GM12878 (cell line): ENCODE measurements at regions of chr16 and their contacts with region 1.

Region 1: DNA sequence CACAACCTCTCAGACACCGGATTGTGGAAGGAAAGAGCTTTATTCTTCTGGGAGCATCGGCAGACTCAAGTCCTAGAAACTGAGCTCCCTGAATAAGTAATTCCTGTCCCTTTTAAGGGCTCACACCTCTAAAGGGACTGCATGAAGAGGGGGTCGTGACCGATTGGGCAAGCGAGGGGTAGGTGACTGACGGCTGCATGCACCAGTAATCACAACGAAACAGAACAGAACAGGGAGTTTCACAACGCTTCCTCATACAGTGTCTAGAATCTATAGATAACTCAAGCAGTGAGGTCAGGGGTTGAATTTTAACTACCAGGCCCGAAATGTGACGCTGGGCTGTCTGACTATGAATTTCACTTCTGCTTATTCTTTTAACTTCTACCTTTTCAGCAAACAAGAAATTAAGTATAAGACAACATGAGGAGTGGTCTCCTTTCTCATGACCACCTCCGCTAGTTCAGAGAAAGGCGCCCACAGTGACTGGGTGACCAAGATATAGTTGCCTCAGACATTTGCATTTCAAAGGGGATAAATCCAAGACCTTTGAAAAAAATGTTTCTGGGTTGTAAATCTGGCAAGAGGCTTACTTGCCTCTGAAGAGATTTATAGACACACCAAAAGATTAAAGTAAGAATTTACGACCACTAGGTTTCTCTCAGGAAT is 88.4 kb upstream of the ATF7IP2 start:
- DNase-seq: peak; percentile 98
- ATAC-seq: peak; percentile 98
- H3K4me3 ChIP-seq: peak overlapping the region; percentile 50; the same call in 1 of the 2 replicates
- H3K27ac ChIP-seq: peak overlapping the region; percentile 99
- H3K4me1 ChIP-seq: peaks cover 31% of the 10 kb centered on the region
- H3K27me3 ChIP-seq: no peaks in the 10 kb centered on the region
- CTCF ChIP-seq: no peak
- EP300 ChIP-seq: peak; percentile 94 to 96; a peak in 3 of 4 replicates
- POLR2A ChIP-seq: peak; percentile 39; the same call in 1 of the 2 replicates
- RAD21 ChIP-seq: no peak

Region 2: DNA sequence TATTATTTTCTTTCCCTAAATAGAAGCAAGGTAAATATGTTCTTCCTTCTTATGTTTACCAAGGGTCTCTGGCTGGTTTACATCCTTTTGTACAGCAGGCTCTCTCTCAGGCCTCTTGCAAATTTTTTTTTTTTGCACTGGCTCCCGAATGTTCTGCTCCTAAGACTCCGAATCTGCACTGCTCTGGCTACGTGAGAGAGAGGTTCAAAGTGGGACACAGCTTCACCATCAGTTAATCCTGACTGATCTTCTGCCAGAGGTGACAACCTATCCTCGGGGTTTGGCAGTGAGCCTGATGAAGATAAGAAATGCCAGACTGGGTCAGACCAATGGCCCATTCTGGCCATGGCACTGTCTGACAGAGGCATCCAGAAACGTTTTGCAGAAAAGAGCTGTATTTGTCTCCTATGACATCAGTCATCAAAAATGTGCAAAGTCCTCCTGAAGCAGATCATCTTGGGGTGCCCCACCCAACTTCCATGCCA is 252.1 kb before region 1 on chr16:
- CTCF ChIA-PET with region 1: no interaction called
- POLR2A ChIA-PET with region 1: no interaction called
- RAD21 ChIA-PET with region 1: no interaction called
- SMC1A ChIA-PET with region 1: no interaction called
- in situ Hi-C with region 1: no loop called
- intact Hi-C with region 1: no loop called
- DNase-seq: no peak
- ATAC-seq: no peak
- H3K4me3 ChIP-seq: no peak overlapping the region
- H3K27ac ChIP-seq: no peak overlapping the region
- H3K4me1 ChIP-seq: no peaks in the 10 kb centered on the region
- H3K27me3 ChIP-seq: no peaks in the 10 kb centered on the region
- CTCF ChIP-seq: no peak
- EP300 ChIP-seq: no peak
- POLR2A ChIP-seq: no peak
- RAD21 ChIP-seq: no peak

Region 3: DNA sequence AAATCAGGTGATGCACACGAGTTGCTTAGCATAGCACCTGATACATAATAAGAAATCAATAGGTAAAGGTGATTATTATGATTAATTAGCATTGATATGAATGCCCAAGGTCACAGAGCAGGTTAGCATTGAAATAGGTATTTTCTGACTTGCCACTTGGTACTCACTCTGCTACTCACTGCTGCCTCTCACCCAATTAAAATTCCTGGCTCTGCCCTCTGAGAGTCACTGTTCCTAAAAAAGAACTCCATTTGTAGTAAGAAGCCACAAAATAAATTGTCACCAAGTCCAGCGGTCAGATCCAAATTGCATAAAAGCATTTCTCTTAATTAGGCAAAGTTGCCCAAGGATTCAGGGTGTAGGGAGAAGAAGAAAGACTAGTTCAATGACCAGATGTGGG is 106.4 kb before region 1 on chr16:
- CTCF ChIA-PET with region 1: no interaction called
- POLR2A ChIA-PET with region 1: no interaction called
- RAD21 ChIA-PET with region 1: no interaction called
- SMC1A ChIA-PET with region 1: no interaction called
- in situ Hi-C with region 1: no loop called
- intact Hi-C with region 1: no loop called
- DNase-seq: no peak
- ATAC-seq: no peak
- H3K4me3 ChIP-seq: no peak overlapping the region
- H3K27ac ChIP-seq: no peak overlapping the region
- H3K4me1 ChIP-seq: no peaks in the 10 kb centered on the region
- H3K27me3 ChIP-seq: no peaks in the 10 kb centered on the region
- CTCF ChIP-seq: no peak
- EP300 ChIP-seq: no peak
- POLR2A ChIP-seq: no peak
- RAD21 ChIP-seq: no peak

Region 4: GRCh38 chr16:10280262-10281170 is 17.0 kb before region 1 on chr16:
- CTCF ChIA-PET with region 1: interaction called, 6 read pairs
- POLR2A ChIA-PET with region 1: no interaction called
- RAD21 ChIA-PET with region 1: interaction called, 5 read pairs
- SMC1A ChIA-PET with region 1: interaction called, 13 read pairs
- in situ Hi-C with region 1: no loop called
- intact Hi-C with region 1: no loop called
- DNase-seq: no peak
- ATAC-seq: peak; percentile 70
- H3K4me3 ChIP-seq: no peak overlapping the region
- H3K27ac ChIP-seq: no peak overlapping the region
- H3K4me1 ChIP-seq: peaks cover 18% of the 10 kb centered on the region
- H3K27me3 ChIP-seq: no peaks in the 10 kb centered on the region
- CTCF ChIP-seq: no peak
- EP300 ChIP-seq: no peak
- POLR2A ChIP-seq: no peak
- RAD21 ChIP-seq: no peak

Region 5: DNA sequence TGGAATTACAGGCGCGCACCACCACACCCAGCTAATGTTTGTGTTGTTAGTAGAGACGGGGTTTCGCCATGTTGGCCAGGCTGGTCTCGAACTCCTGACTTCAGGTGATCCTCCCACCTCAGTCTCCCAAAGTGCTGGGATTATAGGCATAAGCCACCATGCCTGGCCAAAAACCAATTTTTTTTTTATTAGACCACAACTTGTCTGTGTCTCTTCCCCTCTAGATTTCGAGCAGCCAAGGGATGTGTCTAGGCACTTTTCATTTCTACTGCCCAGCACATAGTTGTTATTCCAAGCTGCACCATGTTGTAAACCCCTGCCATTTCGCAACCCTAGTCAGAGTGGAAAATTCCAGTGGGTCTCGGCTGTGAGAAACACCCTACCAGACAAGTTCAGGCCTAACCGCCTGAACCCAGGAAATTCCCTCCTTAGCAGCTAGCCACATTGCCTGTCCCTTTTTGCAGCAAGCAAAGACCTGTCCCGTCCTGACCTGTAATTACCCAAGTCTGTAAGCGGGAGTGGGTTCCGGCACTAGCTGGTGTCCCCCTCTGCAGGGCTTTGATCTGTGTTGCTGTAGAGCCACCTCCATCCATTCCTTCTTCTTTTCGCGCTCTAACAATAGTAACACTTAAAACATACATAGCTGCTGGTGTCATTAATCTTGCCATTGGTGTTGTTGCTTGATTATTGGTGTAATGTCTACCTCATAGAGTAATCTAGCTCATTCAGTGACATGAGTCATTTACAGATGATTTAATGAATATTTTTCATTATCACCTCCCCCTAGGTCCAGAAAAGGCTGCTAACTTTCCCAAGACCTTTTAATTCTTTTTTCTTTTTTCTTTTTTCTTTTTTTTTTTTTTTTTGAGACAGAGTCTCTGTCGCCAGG is 11.1 kb after region 1 on chr16:
- CTCF ChIA-PET with region 1: interaction called, 23 read pairs
- POLR2A ChIA-PET with region 1: interaction called, 76 read pairs
- RAD21 ChIA-PET with region 1: interaction called, 143 read pairs
- SMC1A ChIA-PET with region 1: interaction called, 95 read pairs
- in situ Hi-C with region 1: no loop called
- intact Hi-C with region 1: loop called (anchors 1 kb)
- DNase-seq: peak; percentile 16
- ATAC-seq: peak; percentile 24
- H3K4me3 ChIP-seq: no peak overlapping the region
- H3K27ac ChIP-seq: peak overlapping the region; percentile 50
- H3K4me1 ChIP-seq: peaks cover 31% of the 10 kb centered on the region
- H3K27me3 ChIP-seq: no peaks in the 10 kb centered on the region
- CTCF ChIP-seq: peak in 1 of 3 experiments; percentile 5; a peak in 1 of 6 replicates
- EP300 ChIP-seq: no peak
- POLR2A ChIP-seq: no peak
- RAD21 ChIP-seq: no peak

Region 6: DNA sequence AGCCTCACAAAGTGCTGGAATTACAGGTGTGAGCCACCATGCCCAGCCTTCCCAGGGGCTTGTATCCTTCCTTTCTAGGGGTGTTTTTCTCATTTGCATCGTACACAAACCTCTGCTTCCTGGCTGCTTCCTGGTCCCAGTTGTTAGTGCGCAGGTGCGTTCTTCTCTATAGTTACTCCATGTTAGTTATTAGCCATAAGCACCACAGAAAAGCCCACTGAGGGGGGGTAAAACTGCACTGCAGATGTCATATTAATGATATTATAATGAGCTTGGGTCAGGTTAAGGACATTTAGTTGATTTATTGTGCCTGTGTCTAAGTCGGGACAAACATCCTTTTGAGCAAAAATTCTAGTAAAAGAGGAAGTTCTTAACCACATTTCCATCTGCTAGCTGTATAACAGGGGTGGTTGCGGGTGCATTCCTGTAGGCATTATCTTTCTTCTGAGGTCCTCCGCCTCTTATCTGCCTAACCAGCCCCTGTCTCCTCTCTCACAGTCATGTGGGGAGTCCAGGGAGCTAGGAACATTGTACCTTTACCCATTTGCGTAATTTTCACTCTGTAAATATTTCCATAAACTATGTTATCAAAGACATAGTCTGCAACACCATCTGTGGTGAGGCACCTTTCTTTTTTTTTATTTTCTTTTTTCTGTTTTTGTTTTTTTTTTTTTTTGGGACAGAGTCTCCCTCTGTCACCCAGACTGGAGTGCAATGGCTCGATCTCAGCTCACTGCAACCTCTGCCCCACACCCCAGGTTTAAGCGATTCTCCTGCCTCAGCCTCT is 64.8 kb after region 1 on chr16:
- CTCF ChIA-PET with region 1: no interaction called
- POLR2A ChIA-PET with region 1: no interaction called
- RAD21 ChIA-PET with region 1: no interaction called
- SMC1A ChIA-PET with region 1: no interaction called
- in situ Hi-C with region 1: no loop called
- intact Hi-C with region 1: no loop called
- DNase-seq: peak; percentile 21
- ATAC-seq: peak; percentile 85
- H3K4me3 ChIP-seq: peak overlapping the region; percentile 31; the same call in 1 of the 2 replicates
- H3K27ac ChIP-seq: no peak overlapping the region
- H3K4me1 ChIP-seq: no peaks in the 10 kb centered on the region; the same call in 1 of the 2 replicates
- H3K27me3 ChIP-seq: no peaks in the 10 kb centered on the region
- CTCF ChIP-seq: no peak
- EP300 ChIP-seq: no peak
- POLR2A ChIP-seq: no peak
- RAD21 ChIP-seq: no peak